ENCODE measurements at regions of chr9 and their contacts with region 1.

Region 1: DNA sequence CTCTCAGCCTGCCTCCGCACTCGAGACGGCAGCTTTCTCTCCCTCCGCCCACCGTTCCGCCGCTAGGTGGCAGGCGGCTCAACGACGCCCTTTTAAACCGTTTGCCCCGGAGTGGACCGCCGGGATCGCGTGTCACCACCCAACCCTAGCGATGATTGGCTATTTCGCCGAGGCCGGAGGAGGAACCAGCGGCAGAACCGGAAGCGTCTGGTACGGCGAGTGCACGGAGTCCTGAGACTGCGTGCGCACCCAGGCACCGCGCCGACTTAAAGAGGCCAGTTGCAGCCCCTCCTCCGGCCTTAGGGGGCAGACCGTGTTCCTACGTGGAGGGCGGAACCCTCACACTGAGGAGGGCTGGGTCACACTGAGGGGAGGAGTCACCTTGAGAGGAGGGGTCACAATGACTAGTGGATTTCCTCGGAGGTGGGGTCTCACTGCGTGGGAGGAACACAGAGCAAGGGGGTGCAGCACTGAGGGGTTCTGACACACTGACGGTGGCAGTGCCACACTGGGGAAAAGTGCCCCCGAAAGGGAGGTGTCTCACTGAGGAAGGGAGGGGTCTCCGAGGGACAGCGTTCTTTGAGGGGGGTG is 980 bp upstream of the TESK1 start:
- DNase-seq: peak; percentile 98 to 100
- H3K4me3 ChIP-seq: peak overlapping the region; percentile 92 to 97
- H3K27ac ChIP-seq: peak overlapping the region; percentile 93 to 95
- H3K4me1 ChIP-seq: peaks cover 15 to 26% of the 10 kb centered on the region in 2 donors
- H3K27me3 ChIP-seq: no peaks in the 10 kb centered on the region
- CTCF ChIP-seq: peak; percentile 89 to 96 (median 93)

Region 2: DNA sequence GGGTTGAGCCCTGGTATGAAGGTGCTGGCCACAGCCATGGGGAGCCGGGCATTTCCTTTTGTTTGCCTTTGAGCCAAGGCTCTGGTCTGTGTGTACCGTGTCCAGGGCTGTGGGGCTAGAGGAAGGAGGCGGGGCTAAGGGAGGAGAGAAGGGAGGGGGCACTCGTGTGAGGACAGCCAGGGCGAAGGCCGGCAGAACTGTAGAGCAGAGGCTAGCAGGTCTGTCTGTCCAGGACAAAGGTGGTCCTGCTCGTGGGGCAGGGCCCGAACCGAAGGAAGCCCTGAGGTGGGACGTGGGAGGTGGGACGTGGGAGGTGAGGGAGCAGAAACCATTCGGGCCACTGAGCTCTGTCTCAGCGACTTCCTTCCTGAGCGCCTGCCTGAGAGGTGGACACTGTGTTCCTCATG is 40.3 kb before region 1 on chr9:
- intact Hi-C with region 1: loop called (anchors 1 kb)
- DNase-seq: peak in 1 of 2 donors; percentile 85
- H3K4me3 ChIP-seq: peak overlapping the region; percentile 17 to 19
- H3K27ac ChIP-seq: peak overlapping the region; percentile 83 to 94
- H3K4me1 ChIP-seq: peaks cover 23 to 52% of the 10 kb centered on the region in 2 donors
- H3K27me3 ChIP-seq: no peaks in the 10 kb centered on the region
- CTCF ChIP-seq: no peak

Region 3: GRCh38 chr9:35657546-35658136 is 53.6 kb after region 1 on chr9 and contains the start of gene RMRP:
- intact Hi-C with region 1: loop called (anchors 2 kb)
- DNase-seq: peak; percentile 90 to 99
- H3K4me3 ChIP-seq: peak within 1 kb of the TSS; percentile 88 to 99
- H3K27ac ChIP-seq: peak within 1 kb of the TSS; percentile 97 to 100
- H3K4me1 ChIP-seq: peaks cover 5 to 35% of the 10 kb centered on the region in 2 donors
- H3K27me3 ChIP-seq: no peaks in the 10 kb centered on the region
- CTCF ChIP-seq: peak; percentile 32 to 56 (median 34)
- total RNA-seq, gene RMRP: 17,070 TPM

Region 4: DNA sequence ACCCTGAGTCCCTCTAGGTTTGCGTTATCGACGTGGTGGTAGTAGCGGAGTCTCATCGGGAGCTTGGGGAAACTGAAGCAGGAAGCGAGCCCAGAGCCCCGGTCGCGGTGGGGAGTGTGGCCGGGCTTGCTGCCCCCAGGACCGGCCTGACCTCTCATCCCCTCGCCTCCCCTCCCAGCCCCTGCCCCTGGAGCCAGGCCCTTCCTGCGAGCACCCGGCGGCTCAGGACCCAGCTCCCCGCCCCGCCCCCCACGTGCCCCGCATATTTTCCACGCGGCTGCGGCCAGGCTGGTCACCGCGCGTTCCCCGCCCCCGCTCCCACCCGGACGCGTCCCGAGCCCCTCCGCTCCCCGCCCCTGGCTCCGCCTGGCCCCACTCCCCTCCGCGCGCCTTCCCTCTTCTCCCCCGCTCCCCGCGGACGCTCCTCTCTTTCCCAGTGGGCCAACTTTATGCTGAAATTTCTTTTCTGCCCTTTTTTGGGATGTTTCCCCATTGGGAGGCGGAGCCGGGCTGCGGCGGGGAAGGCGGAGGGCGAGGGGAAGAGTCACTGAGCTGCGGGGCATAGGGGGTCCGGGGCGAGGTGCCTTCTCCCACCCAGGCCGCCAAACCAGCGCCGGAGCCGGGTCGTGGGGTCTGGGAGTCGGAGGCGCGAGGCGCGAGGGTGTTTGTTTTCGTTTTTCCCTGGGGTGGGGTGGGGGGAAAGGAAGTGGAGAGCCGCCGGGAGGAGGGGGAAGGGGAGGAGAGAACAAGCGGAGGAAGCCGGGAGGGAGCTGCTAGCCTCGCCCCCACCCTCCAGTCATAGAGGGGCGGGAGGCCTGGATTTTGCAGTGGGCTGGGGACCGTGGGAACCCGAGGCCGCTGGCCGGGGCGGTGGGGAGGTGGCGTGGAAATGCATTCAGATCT is 86.6 kb after region 1 on chr9:
- intact Hi-C with region 1: loop called (anchors 2 kb)
- DNase-seq: peak; percentile 56 to 94
- H3K4me3 ChIP-seq: peak overlapping the region; percentile 83 to 93
- H3K27ac ChIP-seq: peak overlapping the region; percentile 93 to 97
- H3K4me1 ChIP-seq: peaks cover 0 to 27% of the 10 kb centered on the region in 2 donors
- H3K27me3 ChIP-seq: no peaks in the 10 kb centered on the region
- CTCF ChIP-seq: no peak

Region 5: DNA sequence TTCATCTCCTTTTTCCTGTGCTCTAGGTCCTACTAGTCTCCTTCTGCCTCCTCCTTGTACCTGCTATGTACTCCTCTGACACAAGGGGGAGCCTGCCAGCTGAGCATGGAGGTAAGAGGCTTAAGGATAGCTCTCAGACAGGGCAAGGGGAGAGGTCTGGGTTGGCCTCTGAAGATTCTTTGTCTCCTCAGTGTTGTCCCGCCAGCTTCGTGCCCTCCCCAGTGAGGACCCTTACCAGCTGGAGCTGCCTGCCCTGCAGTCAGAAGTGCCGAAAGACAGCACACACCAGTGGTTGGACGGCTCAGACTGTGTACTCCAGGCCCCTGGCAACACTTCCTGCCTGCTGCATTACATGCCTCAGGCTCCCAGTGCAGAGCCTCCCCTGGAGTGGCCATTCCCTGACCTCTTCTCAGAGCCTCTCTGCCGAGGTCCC is 132.1 kb after region 1 on chr9:
- intact Hi-C with region 1: no loop called
- DNase-seq: peak in 1 of 2 donors; percentile 83
- H3K4me3 ChIP-seq: no peak overlapping the region
- H3K27ac ChIP-seq: peak overlapping the region in 1 of 2 donors; percentile 27
- H3K4me1 ChIP-seq: peaks cover 10 to 21% of the 10 kb centered on the region in 2 donors
- H3K27me3 ChIP-seq: no peaks in the 10 kb centered on the region
- CTCF ChIP-seq: peak; percentile 73 to 82 (median 81)

Region 6: DNA sequence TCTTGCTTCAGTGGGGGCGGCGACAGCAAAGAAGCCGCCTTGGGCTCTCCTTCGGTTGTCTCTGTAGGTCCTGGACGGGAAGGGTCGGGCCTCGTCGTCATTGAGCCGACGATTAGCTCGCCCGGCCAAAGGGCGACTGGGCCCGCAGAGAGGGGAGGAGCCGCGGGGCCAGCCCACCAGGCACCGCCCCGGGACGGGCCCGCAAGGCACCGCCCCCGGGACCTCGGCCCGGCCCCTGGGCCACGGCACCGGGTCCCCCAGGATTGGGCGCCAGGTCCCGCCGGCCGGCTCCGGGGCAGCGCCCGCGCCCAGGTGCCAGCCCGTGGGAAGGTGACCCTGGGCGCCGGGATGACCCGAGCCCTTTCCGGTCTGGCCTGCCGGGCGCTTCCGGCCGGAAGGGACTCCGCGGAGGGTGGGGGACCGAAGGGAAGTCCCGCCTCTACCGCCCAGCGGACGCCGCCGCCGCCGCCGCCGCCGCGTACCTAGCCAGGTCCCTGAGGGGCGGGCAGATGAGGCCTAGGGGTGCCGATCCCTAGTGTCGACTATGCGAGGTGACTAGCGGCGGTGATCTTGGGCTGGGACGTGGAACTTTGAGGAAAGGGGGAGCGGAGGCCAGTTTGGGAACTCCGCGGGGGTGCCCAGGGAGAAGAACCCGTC is 144.9 kb after region 1 on chr9 and contains the starts of genes GBA2 and RGP1:
- intact Hi-C with region 1: loop called (anchors 5 kb)
- DNase-seq: peak in 1 of 2 donors; percentile 89
- H3K4me3 ChIP-seq: peak within 1 kb of the TSS; percentile 87 to 94
- H3K27ac ChIP-seq: peak within 1 kb of the TSS; percentile 94 to 96
- H3K4me1 ChIP-seq: peaks cover 10 to 33% of the 10 kb centered on the region in 2 donors
- H3K27me3 ChIP-seq: no peaks in the 10 kb centered on the region
- CTCF ChIP-seq: no peak
- total RNA-seq, gene GBA2: 40.7 TPM
- total RNA-seq, gene RGP1: 24.8 TPM

Region 7: DNA sequence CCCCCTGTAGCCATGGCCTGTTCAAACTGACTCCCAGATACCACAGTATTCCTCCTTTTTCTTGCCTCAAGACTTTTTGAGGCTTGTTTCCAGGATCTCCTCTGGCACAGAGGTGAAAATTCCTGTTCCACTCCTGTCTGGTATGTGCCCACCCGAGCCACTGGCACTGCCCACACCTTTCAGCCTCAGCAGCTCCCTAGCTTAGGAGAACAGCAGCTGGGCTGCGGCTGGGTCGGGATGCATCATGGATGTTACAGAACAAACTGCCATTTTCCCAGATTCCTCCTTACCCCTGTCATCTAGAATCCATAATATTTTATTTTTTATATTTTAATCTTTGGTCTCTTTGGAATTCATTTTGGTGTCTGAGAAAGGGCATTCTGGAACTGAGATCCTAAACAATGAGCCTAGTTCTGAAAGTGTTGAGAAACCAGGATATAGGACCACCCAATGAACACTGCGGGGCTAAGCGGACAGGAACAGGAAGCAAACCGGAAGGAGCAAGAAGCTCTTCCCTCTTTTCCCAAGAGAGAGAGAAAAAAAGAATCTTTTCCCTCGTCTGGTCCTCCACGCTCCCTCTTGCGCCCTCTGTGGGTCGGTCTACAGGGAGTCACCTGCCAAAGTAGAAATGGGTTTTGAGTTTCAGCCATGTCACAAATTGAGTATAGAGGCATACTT is 341.4 kb after region 1 on chr9:
- intact Hi-C with region 1: no loop called
- DNase-seq: peak in 1 of 2 donors; percentile 87
- H3K4me3 ChIP-seq: peak overlapping the region in 1 of 2 donors; percentile 9
- H3K27ac ChIP-seq: peak overlapping the region; percentile 53 to 72
- H3K4me1 ChIP-seq: peaks cover 5 to 21% of the 10 kb centered on the region in 2 donors
- H3K27me3 ChIP-seq: no peaks in the 10 kb centered on the region
- CTCF ChIP-seq: peak; percentile 69 to 87 (median 85)